Gastrocnemius medialis (tissue), 4 donors: ENCODE measurements at regions of chr14 and their contacts with region 1.

Region 1: DNA sequence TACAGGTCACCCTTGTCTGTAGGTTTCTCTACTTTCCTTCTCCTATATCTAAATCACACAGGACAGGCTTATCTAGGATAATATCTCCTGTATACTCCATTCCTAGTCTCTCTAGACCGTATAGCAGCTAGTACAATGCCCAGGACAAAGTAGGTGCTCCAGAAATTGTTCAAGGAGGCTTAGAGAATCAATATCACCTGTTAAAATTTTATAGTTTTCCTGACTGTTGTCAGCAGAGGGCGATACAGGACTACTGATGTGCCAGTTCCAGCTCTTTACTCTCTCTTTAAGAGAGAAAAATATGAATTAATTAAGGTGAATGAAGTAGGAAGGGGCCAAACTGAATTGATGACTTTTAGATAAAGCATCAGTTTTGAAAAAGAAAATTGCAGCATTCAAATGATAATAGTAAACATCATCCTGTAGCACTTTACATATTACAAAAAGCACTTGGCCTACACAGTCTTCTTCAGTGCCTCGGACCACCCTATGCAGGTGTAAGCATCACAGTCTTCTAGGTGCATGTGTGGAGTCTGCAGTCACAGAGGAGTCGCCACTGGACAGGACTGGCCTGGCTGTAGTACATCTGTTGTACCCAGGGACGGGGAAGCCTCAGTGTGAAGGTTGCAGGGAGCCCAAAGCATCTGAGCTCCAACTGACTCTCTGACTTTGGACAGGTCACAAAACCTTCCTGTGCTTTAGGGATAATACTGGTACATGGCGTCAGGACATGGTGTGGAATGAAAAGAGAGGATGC is 61.9 kb upstream of the MAX start:
- DNase-seq: no peak
- ATAC-seq: peak; percentile 42 to 45
- H3K4me3 ChIP-seq: no peak overlapping the region
- H3K27ac ChIP-seq: no peak overlapping the region
- H3K4me1 ChIP-seq: no peaks in the 10 kb centered on the region
- H3K27me3 ChIP-seq: no peaks in the 10 kb centered on the region
- CTCF ChIP-seq: peak; percentile 45 to 67 (median 62)
- POLR2A ChIP-seq: no peak

Region 2: GRCh38 chr14:65184032-65184764 is 20.0 kb after region 1 on chr14:
- in situ Hi-C with region 1: no loop called
- intact Hi-C with region 1: no loop called
- DNase-seq: no peak
- ATAC-seq: no peak
- H3K4me3 ChIP-seq: no peak overlapping the region
- H3K27ac ChIP-seq: no peak overlapping the region
- H3K4me1 ChIP-seq: peaks cover 0 to 7% of the 10 kb centered on the region in 2 donors
- H3K27me3 ChIP-seq: peaks cover 0 to 3% (median 0%) of the 10 kb centered on the region in 3 donors
- CTCF ChIP-seq: no peak
- POLR2A ChIP-seq: no peak

Region 3: DNA sequence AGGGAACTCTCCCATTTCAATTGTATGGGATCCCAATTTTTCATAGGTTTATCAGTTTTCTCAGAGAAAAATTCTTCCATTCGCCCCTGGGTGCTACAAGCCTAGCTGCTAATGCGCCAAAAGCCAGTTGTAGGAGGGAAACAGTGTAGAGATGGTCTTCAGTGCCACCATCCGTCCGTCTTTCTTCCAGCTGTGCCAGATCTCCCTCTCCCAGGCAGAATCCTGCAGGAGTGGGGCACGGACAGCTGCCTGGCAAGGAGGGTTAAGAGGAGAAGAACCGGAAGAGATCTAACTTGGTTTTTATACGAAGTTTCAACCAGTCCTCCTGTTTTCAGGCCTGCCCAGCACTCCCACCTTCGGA is 209.4 kb after region 1 on chr14:
- in situ Hi-C with region 1: loop called in 2 of 4 experiments (anchors 10 kb)
- intact Hi-C with region 1: loop called (anchors 1 kb)
- DNase-seq: peak; percentile 28 to 40
- ATAC-seq: peak; percentile 89 to 97
- H3K4me3 ChIP-seq: peak overlapping the region in 1 of 4 donors; percentile 37
- H3K27ac ChIP-seq: no peak overlapping the region
- H3K4me1 ChIP-seq: no peaks in the 10 kb centered on the region
- H3K27me3 ChIP-seq: peaks cover 0 to 3% (median 0%) of the 10 kb centered on the region in 3 donors
- CTCF ChIP-seq: peak; percentile 17 to 48 (median 29)
- POLR2A ChIP-seq: no peak

Region 4: DNA sequence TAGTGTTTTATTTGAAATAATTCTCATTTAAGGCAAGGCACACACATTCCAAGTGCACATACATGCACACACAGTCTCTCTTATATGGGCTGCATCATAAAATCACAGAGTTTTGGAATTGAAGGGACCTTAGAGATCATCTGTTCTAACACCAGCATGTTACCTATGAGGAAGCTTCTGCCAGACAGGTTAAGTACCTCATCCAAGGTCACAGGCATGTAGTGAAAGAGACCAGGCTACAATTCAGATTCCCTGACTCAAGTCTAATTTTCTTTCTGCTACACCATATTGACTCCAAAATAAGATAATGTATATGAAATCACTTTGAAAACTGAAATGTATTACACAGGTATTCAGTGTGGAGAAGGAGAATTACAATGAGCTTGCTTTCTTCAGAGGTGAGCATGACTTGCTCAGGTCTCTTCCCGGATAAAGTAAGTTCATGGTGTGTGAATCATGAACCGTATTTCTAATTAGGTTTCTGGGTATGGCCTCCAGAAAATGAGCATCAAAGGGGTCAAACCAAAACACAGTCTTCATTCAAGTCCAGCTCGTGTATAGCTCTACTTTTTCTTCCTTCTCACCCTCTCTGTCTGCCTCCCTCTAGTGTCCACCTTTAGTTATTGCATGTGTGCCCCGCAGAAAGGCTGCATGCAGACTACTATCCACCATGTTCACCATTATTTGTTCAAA is 660.2 kb after region 1 on chr14:
- in situ Hi-C with region 1: loop called (anchors 5 to 25 kb)
- intact Hi-C with region 1: loop called (anchors 1 kb)
- DNase-seq: peak; percentile 10 to 39
- ATAC-seq: peak; percentile 84 to 88
- H3K4me3 ChIP-seq: no peak overlapping the region
- H3K27ac ChIP-seq: no peak overlapping the region
- H3K4me1 ChIP-seq: no peaks in the 10 kb centered on the region
- H3K27me3 ChIP-seq: no peaks in the 10 kb centered on the region
- CTCF ChIP-seq: peak; percentile 56 to 91 (median 78)
- POLR2A ChIP-seq: no peak

Region 5: GRCh38 chr14:65832431-65833266 is 668.4 kb after region 1 on chr14:
- in situ Hi-C with region 1: loop called in 3 of 4 experiments (anchors 5 to 25 kb)
- intact Hi-C with region 1: no loop called
- DNase-seq: peak in 1 of 2 donors; percentile 33
- ATAC-seq: peak in 1 of 2 donors; percentile 70
- H3K4me3 ChIP-seq: no peak overlapping the region
- H3K27ac ChIP-seq: peak overlapping the region in 2 of 4 donors; percentile 40 to 47
- H3K4me1 ChIP-seq: no peaks in the 10 kb centered on the region
- H3K27me3 ChIP-seq: no peaks in the 10 kb centered on the region
- CTCF ChIP-seq: no peak
- POLR2A ChIP-seq: no peak

Region 6: GRCh38 chr14:65958664-65959562 is 794.7 kb after region 1 on chr14:
- in situ Hi-C with region 1: loop called in 3 of 4 experiments (anchors 5 to 25 kb)
- intact Hi-C with region 1: loop called (anchors 5 kb)
- DNase-seq: no peak
- ATAC-seq: peak in 1 of 2 donors; percentile 51
- H3K4me3 ChIP-seq: no peak overlapping the region
- H3K27ac ChIP-seq: no peak overlapping the region
- H3K4me1 ChIP-seq: no peaks in the 10 kb centered on the region
- H3K27me3 ChIP-seq: no peaks in the 10 kb centered on the region
- CTCF ChIP-seq: peak in 2 of 5 experiments; percentile 40 to 41
- POLR2A ChIP-seq: no peak